Activated CD8-positive, alpha-beta T cell treated with anti-CD3 and anti-CD28 coated beads, Interleukin-2, amount 10 ng/mL, durations not matched to agents 7 days and 5 days (primary cell): ENCODE measurements at regions of chr2 and their contacts with region 1.

Region 1: DNA sequence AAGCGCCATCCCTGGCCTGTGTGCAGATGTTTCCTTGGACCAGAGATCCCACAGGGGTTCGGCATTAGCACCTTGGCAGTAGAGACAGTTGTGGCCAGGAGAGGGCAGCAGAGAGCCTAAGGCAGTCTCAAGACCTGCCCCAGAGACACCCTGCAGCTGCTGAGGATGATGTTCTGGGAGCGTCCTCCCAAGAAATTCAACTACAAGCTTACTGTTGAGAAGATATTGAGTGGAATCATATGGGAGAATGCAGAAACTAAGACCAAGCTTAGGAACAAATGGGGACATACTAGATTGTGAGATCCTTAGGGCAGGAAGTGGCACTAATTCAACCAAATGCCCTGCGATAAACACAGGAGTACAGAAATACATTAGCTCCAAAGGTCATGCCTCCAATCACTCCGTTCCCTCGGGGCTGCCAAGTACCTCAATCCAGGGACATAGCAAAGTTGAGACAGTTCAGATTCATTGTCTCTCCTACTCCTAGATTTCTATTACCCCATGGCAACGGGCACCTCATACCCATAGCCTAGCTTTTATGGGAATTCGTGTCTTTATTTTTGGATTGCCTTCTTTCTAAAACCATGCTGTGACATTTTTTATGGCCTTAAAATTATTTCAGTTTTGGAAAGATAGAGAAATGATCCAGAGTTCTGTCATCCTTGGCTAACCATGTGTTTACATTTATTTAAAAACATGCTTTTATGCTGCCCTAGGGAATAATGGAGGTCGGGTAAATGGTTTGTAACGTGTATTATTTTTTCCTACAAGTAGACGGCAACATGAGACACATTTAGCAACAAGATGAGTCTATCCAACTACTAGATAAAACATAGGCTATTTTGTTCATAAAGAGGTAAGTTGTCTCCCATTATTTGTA is 2.2 kb upstream of the ERMN start:
- DNase-seq: peak; percentile 91
- ATAC-seq: peak; percentile 96
- H3K4me3 Mint-ChIP-seq: peak overlapping the region; percentile 27
- H3K27ac Mint-ChIP-seq: peak overlapping the region; percentile 56
- H3K4me1 Mint-ChIP-seq: peaks cover 41% of the 10 kb centered on the region
- H3K27me3 Mint-ChIP-seq: no peaks in the 10 kb centered on the region

Region 2: DNA sequence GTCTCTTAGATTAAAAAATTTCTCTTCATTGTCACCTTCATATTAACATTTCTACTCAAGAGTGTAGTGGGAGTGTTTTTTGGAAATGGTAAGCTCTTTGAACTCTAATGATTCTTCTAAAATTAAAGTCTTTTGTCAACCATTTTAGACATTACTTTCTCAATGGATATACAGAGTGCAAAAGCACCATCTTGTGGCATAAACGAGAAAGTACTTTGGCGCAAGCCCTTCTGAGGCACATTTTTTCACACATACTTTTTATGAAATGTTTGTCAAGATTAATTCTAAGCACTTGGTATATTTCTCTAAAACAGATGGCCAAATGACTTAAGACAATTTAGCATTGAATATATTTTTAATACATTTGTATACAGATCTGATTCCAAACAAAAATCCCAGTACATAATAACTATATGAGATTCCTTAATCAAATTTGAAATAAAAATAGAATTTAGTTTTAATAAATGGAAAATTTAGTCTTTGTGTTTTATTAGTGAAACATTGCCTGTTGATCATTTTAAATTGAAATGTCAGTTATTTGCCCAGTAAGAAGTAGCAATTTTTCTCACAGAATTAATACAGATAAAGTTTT is 133.7 kb before region 1 on chr2:
- CTCF ChIA-PET with region 1: no interaction called
- POLR2A ChIA-PET with region 1: no interaction called
- DNase-seq: peak; percentile 37
- ATAC-seq: no peak
- H3K4me3 Mint-ChIP-seq: no peak overlapping the region
- H3K27ac Mint-ChIP-seq: no peak overlapping the region
- H3K4me1 Mint-ChIP-seq: peaks cover 4% of the 10 kb centered on the region
- H3K27me3 Mint-ChIP-seq: peaks cover 5% of the 10 kb centered on the region

Region 3: DNA sequence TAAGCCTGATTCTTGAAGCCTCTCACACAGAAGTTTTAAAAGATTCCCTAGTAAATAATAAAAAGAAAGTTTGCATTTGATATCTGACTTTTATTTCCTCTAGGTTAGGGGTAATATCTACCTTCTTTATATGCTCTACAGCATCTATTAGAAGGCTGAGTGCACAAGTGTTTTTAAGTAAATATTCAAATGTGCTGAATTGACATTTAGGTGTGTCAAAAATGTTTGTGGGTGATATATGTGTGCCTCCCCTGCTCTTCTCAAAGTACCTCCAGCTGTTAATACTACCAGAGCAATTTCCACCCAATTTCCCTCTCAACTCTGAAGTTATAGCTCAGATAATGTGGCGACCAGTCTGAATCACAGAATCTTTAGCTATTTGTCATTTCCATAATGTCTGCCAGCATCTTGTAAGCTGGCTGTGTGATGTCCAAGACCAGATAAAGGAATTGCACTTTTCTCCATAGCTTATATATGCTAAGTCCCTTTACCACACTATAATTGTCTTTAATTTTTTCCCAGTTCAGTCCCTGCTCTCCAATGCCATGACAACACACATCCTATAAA is 22.2 kb after region 1 on chr2:
- CTCF ChIA-PET with region 1: interaction called, 151 read pairs
- POLR2A ChIA-PET with region 1: interaction called, 3 read pairs
- DNase-seq: no peak
- ATAC-seq: no peak
- H3K4me3 Mint-ChIP-seq: no peak overlapping the region
- H3K27ac Mint-ChIP-seq: no peak overlapping the region
- H3K4me1 Mint-ChIP-seq: peaks cover 14% of the 10 kb centered on the region
- H3K27me3 Mint-ChIP-seq: no peaks in the 10 kb centered on the region

Region 4: DNA sequence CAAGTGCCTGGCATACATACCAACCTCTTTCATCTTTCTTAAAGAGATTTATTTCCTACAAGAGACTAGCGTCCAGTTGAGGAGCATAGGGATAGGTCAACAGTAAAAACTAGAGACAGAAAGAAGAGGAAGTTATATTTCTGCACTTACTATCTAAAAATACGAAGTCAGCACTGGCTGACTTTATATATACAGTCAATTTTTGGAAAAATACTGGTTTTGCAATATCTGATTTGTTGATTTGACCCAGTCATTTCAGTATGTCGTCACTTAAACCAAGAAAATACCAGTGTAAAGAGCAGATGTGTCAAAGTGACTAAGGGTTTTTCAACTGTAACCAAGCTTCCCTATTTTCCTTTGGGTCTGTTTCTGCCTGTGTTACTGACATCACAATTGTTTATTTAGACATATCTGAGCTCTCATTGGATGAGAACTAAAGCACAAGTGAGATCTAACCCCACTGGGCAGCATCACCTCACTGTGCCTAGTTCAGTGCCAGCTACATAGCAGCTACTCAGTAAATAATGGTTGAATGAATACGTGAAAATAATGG is 93.0 kb after region 1 on chr2:
- CTCF ChIA-PET with region 1: interaction called, 66 read pairs
- POLR2A ChIA-PET with region 1: interaction called, 9 read pairs
- DNase-seq: no peak
- ATAC-seq: peak; percentile 10
- H3K4me3 Mint-ChIP-seq: peak overlapping the region; percentile 45
- H3K27ac Mint-ChIP-seq: peak overlapping the region; percentile 81
- H3K4me1 Mint-ChIP-seq: peaks cover 75% of the 10 kb centered on the region
- H3K27me3 Mint-ChIP-seq: no peaks in the 10 kb centered on the region

Region 5: GRCh38 chr2:157443795-157444640 is 116.2 kb after region 1 on chr2 and contains the start of gene CYTIP:
- CTCF ChIA-PET with region 1: interaction called, 73 read pairs
- POLR2A ChIA-PET with region 1: interaction called, 20 read pairs
- DNase-seq: peak; percentile 87
- ATAC-seq: peak; percentile 45
- H3K4me3 Mint-ChIP-seq: peak within 1 kb of the TSS; percentile 94
- H3K27ac Mint-ChIP-seq: peak within 1 kb of the TSS; percentile 92
- H3K4me1 Mint-ChIP-seq: peaks cover 33% of the 10 kb centered on the region
- H3K27me3 Mint-ChIP-seq: no peaks in the 10 kb centered on the region
- total RNA-seq, gene CYTIP: 222 to 227 TPM

Region 6: GRCh38 chr2:157480182-157480961 is 152.5 kb after region 1 on chr2:
- CTCF ChIA-PET with region 1: interaction called, 128 read pairs
- POLR2A ChIA-PET with region 1: no interaction called
- DNase-seq: peak; percentile 57
- ATAC-seq: peak; percentile 32
- H3K4me3 Mint-ChIP-seq: peak overlapping the region; percentile 80
- H3K27ac Mint-ChIP-seq: peak overlapping the region; percentile 98
- H3K4me1 Mint-ChIP-seq: peaks cover 79% of the 10 kb centered on the region
- H3K27me3 Mint-ChIP-seq: no peaks in the 10 kb centered on the region

Region 7: GRCh38 chr2:157628477-157629415 is 300.9 kb after region 1 on chr2 and contains the start of gene ACVR1C:
- CTCF ChIA-PET with region 1: interaction called, 17 read pairs
- POLR2A ChIA-PET with region 1: no interaction called
- DNase-seq: peak; percentile 75
- ATAC-seq: peak; percentile 95
- H3K4me3 Mint-ChIP-seq: peak within 1 kb of the TSS; percentile 81
- H3K27ac Mint-ChIP-seq: no peak within 1 kb of the TSS
- H3K4me1 Mint-ChIP-seq: peaks cover 26% of the 10 kb centered on the region
- H3K27me3 Mint-ChIP-seq: peaks cover 15% of the 10 kb centered on the region
- total RNA-seq, gene ACVR1C: 0.63 to 0.73 TPM